CD14-positive monocyte (primary cell): ENCODE measurements at regions of chr9 and their contacts with region 1.

Region 1: GRCh38 chr9:134475011-134475790 is 148.9 kb downstream of the RXRA start:
- DNase-seq: no peak
- H3K4me3 ChIP-seq: no peak overlapping the region
- H3K4me3 Mint-ChIP-seq: no peak overlapping the region
- H3K27ac ChIP-seq: peak overlapping the region; percentile 59 to 76
- H3K27ac Mint-ChIP-seq: peak overlapping the region in 4 of 7 donors; percentile 2 to 62 (median 22)
- H3K4me1 ChIP-seq: no peaks in the 10 kb centered on the region
- H3K4me1 Mint-ChIP-seq: no peaks in the 10 kb centered on the region
- H3K27me3 ChIP-seq: no peaks in the 10 kb centered on the region
- H3K27me3 Mint-ChIP-seq: peaks cover 4 to 20% (median 5%) of the 10 kb centered on the region in 3 donors
- CTCF ChIP-seq: no peak

Region 2: DNA sequence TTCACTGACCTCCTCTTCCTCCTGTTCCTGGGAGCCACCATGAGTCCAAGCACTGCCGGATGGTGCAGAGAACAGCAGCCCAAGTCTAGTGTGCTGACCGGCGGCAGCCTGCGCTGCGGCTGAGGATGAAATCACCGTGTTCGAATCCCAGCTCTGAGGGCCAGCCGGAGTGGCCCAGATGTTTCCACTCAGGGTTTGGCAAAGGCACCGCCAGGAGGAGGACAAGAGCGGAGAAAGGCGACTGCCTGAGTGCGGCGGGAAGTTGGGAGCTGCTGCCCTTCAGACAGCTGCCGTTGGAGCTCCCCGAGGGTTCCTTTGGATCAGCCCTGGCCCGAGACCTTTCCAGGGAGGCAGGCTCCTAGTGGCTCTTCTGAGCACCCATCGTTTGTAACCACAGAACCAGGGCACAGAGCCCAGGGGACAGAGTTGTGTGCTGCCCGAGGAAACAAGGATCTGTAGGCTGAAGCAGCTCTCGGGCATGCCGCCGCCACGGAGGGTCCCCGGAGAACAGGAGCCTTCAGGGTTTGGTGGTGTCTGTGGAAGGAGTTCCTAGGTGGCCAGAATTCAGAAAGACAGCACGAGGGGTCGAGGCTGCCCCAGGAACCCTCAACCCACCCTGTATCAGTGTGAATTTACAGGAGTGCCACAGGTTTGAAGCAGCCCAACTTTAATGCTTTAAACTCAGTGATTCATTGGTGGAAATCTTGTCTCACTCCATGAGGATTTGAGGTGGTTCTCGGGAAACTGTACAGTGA is 50.8 kb after region 1 on chr9:
- intact Hi-C with region 1: no loop called
- DNase-seq: no peak
- H3K4me3 ChIP-seq: no peak overlapping the region
- H3K4me3 Mint-ChIP-seq: no peak overlapping the region
- H3K27ac ChIP-seq: no peak overlapping the region
- H3K27ac Mint-ChIP-seq: no peak overlapping the region
- H3K4me1 ChIP-seq: no peaks in the 10 kb centered on the region
- H3K4me1 Mint-ChIP-seq: no peaks in the 10 kb centered on the region
- H3K27me3 ChIP-seq: no peaks in the 10 kb centered on the region
- H3K27me3 Mint-ChIP-seq: peaks cover 4 to 7% (median 6%) of the 10 kb centered on the region in 3 donors
- CTCF ChIP-seq: no peak

Region 3: GRCh38 chr9:134783699-134784039 is 308.5 kb after region 1 on chr9:
- intact Hi-C with region 1: no loop called
- DNase-seq: no peak
- H3K4me3 ChIP-seq: no peak overlapping the region
- H3K4me3 Mint-ChIP-seq: no peak overlapping the region
- H3K27ac ChIP-seq: no peak overlapping the region
- H3K27ac Mint-ChIP-seq: peak overlapping the region in 1 of 7 donors; percentile 9
- H3K4me1 ChIP-seq: no peaks in the 10 kb centered on the region
- H3K4me1 Mint-ChIP-seq: no peaks in the 10 kb centered on the region
- H3K27me3 ChIP-seq: peaks cover 0 to 10% of the 10 kb centered on the region in 2 donors
- H3K27me3 Mint-ChIP-seq: peaks cover 15 to 40% (median 17%) of the 10 kb centered on the region in 3 donors
- CTCF ChIP-seq: no peak

Region 4: DNA sequence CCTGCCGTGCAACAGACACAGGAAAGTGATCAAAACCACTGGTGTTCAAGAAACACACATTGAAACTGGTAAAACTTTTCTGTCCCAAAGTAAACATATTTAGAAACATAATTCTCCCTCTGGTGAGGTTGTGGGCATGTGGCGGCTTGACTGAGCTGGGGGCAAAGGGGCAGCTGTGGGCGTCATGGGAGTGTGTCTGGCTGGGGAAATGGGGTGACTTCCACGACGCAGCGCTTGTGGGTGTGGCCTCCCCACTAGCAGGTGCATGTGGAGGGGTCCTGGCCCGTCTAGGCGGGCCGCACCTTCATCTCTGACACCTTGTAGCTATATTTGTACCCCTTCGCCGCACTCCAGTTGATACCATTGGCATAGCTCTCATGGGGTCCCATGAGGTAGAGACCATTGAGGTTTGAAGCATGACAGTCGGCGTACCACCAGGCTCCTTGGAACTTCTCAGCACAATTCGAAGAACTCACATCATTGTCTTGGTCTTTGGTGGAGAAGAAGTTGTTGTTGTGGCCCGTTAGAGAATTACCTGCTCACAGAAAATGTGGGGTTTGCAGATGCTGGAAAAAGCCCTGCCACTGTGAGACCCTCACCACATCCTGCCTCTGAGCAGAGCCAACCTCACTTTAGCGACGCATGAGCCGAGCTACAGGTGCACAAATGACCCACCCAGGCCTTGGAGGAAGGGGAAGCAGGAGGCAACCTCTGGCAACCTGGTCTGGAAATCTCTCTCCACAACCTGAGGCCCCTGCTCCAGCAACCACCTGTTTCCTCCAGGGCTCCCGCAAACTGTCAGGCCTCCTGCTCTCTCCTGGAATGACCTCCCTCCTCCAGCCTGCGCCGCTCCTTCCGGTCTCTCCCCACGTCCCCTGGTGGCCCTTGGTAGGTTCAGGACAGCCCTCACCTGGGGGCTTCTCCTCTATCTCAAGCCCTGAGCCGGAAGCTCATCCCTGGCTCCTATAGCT is 434.6 kb after region 1 on chr9:
- intact Hi-C with region 1: loop called in 1 of 2 experiments (anchors 5 kb)
- DNase-seq: peak in 1 of 3 donors; percentile 0
- H3K4me3 ChIP-seq: peak overlapping the region in 1 of 3 experiments; percentile 16
- H3K4me3 Mint-ChIP-seq: no peak overlapping the region
- H3K27ac ChIP-seq: peak overlapping the region; percentile 32 to 72
- H3K27ac Mint-ChIP-seq: peak overlapping the region in 5 of 7 donors; percentile 46 to 87 (median 71)
- H3K4me1 ChIP-seq: peaks cover 32 to 36% of the 10 kb centered on the region in 2 donors
- H3K4me1 Mint-ChIP-seq: peaks cover 38% of the 10 kb centered on the region
- H3K27me3 ChIP-seq: no peaks in the 10 kb centered on the region
- H3K27me3 Mint-ChIP-seq: peaks cover 0 to 7% (median 0%) of the 10 kb centered on the region in 3 donors
- CTCF ChIP-seq: no peak